Activated T-helper 2 cell treated with anti-CD3 and anti-CD28 coated beads, Interferon-gamma antibody, Interleukin-2, Interleukin-4, amounts not matched to agents 10 μg/mL and 5 μg/mL and 100 μg/mL, durations not matched to agents 14 hours and 24 hours and 36 hours (primary cell): ENCODE measurements at regions of chr1 and their contacts with region 1.

Region 1: GRCh38 chr1:112395821-112396652 is at the start of gene CTTNBP2NL:
- DNase-seq: peak; percentile 73
- H3K4me3 Mint-ChIP-seq: peak within 1 kb of the TSS; percentile 93
- H3K27ac Mint-ChIP-seq: peak within 1 kb of the TSS; percentile 23
- H3K4me1 Mint-ChIP-seq: peaks cover 31% of the 10 kb centered on the region
- H3K27me3 Mint-ChIP-seq: peaks cover 8% of the 10 kb centered on the region
- total RNA-seq, gene CTTNBP2NL: 5.7 and 7.1 TPM in 2 replicates

Region 2: GRCh38 chr1:112508278-112509004 is 112.4 kb after region 1 on chr1 and contains the start of gene WNT2B:
- intact Hi-C with region 1: loop called (anchors 5 kb)
- DNase-seq: peak; percentile 33
- H3K4me3 Mint-ChIP-seq: peak within 1 kb of the TSS; percentile 69
- H3K27ac Mint-ChIP-seq: no peak within 1 kb of the TSS
- H3K4me1 Mint-ChIP-seq: peaks cover 2% of the 10 kb centered on the region
- H3K27me3 Mint-ChIP-seq: peaks cover 55% of the 10 kb centered on the region
- total RNA-seq, gene WNT2B: 0.16 TPM in 1 of 2 replicates, not detected in the other